Activated CD4-positive, alpha-beta memory T cell treated with anti-CD3 and anti-CD28 coated beads, Interleukin-2, amount 10 ng/mL, durations not matched to agents 7 days and 5 days (primary cell): ENCODE measurements at regions of chr3 and their contacts with region 1.

Region 1: DNA sequence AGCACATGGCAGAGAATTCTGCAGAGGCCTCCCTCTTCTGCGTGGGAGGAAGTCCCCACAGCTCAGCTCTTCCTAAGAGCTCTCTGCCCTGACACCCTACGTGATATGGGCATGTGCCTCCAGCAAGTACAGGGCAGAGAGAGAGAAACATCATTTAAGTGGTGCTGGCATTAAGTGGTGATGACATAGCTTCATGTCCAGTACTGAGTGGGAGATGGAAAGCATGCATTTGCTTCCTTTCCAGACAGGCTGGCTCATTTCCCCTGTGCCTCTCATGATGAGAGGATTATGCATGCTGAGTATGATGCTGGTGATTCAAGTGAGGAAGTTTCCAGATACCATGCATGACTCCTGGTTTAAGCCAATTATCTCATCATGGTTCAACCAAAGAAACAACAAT is 26.9 kb downstream of the BFSP2 start:
- DNase-seq: no peak
- H3K4me3 Mint-ChIP-seq: no peak overlapping the region
- H3K27ac Mint-ChIP-seq: no peak overlapping the region
- H3K4me1 Mint-ChIP-seq: peaks cover 2% of the 10 kb centered on the region
- H3K27me3 Mint-ChIP-seq: peaks cover 1% of the 10 kb centered on the region

Region 2: DNA sequence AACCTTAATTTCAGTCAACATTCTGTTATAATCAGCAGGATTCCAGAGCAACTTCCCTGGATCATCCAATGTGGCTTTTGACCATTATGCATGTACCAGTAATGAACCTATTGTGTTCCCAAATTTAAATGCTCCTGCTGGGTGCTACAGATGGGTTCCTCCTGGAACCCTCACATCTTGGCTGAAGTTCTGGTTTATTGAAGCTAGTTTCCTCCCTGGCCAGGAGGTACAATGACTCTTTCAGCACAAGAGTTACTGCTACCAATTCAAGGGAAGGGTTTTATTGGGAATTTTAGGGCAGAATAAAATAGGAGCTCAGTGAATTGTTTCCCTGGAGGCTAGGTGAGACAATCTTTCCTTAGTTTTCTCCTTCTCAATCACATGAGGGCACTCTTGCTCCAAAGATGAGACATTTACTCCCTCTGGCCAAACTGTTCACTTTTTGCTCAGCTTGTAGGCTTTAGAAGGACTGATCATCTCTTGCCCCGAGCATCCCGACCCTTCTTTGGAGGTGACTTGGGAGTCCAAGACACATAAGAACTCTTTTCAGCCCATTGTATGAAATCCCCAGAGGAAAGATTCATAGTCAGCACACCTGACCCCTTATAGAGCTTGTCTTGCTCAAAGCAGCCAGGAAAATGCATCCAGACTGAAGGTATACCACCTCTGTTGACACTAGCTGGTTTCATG is 695.7 kb before region 1 on chr3:
- CTCF ChIA-PET with region 1: interaction called, 29 read pairs
- POLR2A ChIA-PET with region 1: interaction called, 3 read pairs
- DNase-seq: no peak
- H3K4me3 Mint-ChIP-seq: no peak overlapping the region
- H3K27ac Mint-ChIP-seq: no peak overlapping the region
- H3K4me1 Mint-ChIP-seq: no peaks in the 10 kb centered on the region
- H3K27me3 Mint-ChIP-seq: peaks cover 33% of the 10 kb centered on the region

Region 3: DNA sequence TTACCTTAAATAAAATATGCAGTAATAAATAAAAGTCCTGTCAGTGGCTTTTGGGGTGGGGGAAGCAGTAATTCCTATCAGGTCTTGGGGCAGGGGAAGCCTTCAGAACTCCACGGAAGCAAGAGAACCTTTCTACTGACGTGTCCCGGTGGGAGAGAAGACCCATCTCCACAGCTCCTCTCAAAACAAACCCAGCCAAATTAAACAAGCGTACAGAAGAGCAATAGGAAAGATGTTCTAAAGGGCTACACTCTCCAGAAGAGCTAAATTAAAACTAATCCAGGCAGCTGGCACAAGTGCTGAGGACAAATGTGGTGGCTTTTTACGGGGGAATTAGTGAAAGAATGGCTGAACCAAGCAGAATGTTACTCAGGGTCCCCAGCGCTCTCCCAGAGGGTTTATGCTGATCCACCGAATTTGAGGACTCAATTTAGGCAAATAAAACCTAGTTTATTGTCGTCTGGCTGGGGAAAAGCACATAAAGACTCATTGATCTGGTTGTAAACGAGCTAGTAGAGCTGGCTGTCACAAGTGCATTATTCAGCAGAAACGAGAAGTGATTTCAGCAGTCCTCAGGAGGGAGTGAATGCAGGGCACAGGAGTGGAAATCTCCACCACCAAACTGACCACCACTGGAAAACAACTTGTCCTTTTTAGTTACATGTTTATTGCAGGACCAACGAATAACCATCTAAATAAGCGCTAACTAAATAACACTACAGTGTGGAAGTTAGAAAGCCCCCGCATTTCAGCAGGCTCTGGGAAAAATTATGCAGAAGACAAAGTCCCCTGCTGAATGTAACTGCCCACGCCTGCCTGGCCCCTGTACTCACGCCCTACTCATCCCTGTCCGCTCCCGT is 13.3 kb before region 1 on chr3:
- CTCF ChIA-PET with region 1: interaction called, 14 read pairs
- POLR2A ChIA-PET with region 1: no interaction called
- DNase-seq: no peak
- H3K4me3 Mint-ChIP-seq: no peak overlapping the region
- H3K27ac Mint-ChIP-seq: no peak overlapping the region
- H3K4me1 Mint-ChIP-seq: no peaks in the 10 kb centered on the region
- H3K27me3 Mint-ChIP-seq: peaks cover 13% of the 10 kb centered on the region

Region 4: GRCh38 chr3:133509488-133509887 is 82.8 kb after region 1 on chr3:
- CTCF ChIA-PET with region 1: no interaction called
- POLR2A ChIA-PET with region 1: no interaction called
- DNase-seq: no peak
- H3K4me3 Mint-ChIP-seq: no peak overlapping the region
- H3K27ac Mint-ChIP-seq: no peak overlapping the region
- H3K4me1 Mint-ChIP-seq: peaks cover 15% of the 10 kb centered on the region
- H3K27me3 Mint-ChIP-seq: no peaks in the 10 kb centered on the region